AG04450 (cell line): ENCODE measurements at regions of chr4 and their contacts with region 1.

Region 1: GRCh38 chr4:150078637-150079581 is 664 bp downstream of the DCLK2 start:
- DNase-seq: no peak
- H3K4me3 ChIP-seq: peak overlapping the region; percentile 78
- H3K27ac ChIP-seq: peak overlapping the region; percentile 47
- H3K27me3 ChIP-seq: no peaks in the 10 kb centered on the region
- CTCF ChIP-seq: no peak; the same call in 1 of the 2 replicates

Region 2: DNA sequence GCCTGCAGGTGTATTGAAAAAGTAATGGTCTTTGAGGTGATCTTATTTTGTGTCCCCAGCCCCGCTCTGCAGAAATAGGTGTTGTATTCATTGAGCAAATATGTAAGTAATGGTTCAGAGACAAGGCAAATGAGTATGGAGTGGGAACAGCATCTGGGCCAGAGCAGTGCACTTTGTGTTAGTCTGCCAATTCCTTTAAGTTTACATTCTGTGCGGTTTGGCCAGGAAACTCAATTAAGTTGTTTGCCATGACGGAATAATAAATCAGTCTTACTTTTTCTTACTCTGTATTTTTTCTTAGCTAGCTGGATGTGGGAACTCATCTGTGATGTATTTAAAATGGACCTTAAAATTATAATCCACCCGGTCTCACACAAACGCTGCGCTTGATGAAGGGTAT is 11.9 kb after region 1 on chr4:
- CTCF ChIA-PET with region 1: interaction called, 3 read pairs
- POLR2A ChIA-PET with region 1: interaction called, 10 read pairs
- DNase-seq: peak; percentile 62
- H3K4me3 ChIP-seq: no peak overlapping the region
- H3K27ac ChIP-seq: no peak overlapping the region
- H3K27me3 ChIP-seq: no peaks in the 10 kb centered on the region
- CTCF ChIP-seq: no peak

Region 3: GRCh38 chr4:150145090-150145949 is 66.4 kb after region 1 on chr4:
- CTCF ChIA-PET with region 1: no interaction called
- POLR2A ChIA-PET with region 1: no interaction called
- DNase-seq: no peak
- H3K4me3 ChIP-seq: no peak overlapping the region
- H3K27ac ChIP-seq: no peak overlapping the region
- H3K27me3 ChIP-seq: no peaks in the 10 kb centered on the region
- CTCF ChIP-seq: peak; percentile 45